ENCODE measurements at regions of chr19 and their contacts with region 1.

Region 1: GRCh38 chr19:32041681-32042292 is 303.6 kb upstream of the ZNF507 start:
- DNase-seq: peak in 1 of 2 experiments; percentile 46
- H3K4me3 ChIP-seq: no peak overlapping the region
- H3K4me3 Mint-ChIP-seq: no peak overlapping the region
- H3K27ac Mint-ChIP-seq: no peak overlapping the region
- H3K4me1 ChIP-seq: no peaks in the 10 kb centered on the region
- H3K4me1 Mint-ChIP-seq: no peaks in the 10 kb centered on the region
- H3K27me3 ChIP-seq: no peaks in the 10 kb centered on the region
- H3K27me3 Mint-ChIP-seq: peaks cover 24% of the 10 kb centered on the region
- CTCF ChIP-seq: peak; percentile 52 to 67

Region 2: GRCh38 chr19:31681121-31681520 is 360.7 kb before region 1 on chr19:
- CTCF ChIA-PET with region 1: no interaction called
- POLR2A ChIA-PET with region 1: no interaction called
- intact Hi-C with region 1: loop called (anchors 10 kb)
- DNase-seq: no peak
- H3K4me3 ChIP-seq: no peak overlapping the region
- H3K4me3 Mint-ChIP-seq: no peak overlapping the region
- H3K27ac Mint-ChIP-seq: no peak overlapping the region
- H3K4me1 ChIP-seq: no peaks in the 10 kb centered on the region
- H3K4me1 Mint-ChIP-seq: no peaks in the 10 kb centered on the region
- H3K27me3 ChIP-seq: no peaks in the 10 kb centered on the region; the same call in 1 of the 2 replicates
- H3K27me3 Mint-ChIP-seq: peaks cover 20% of the 10 kb centered on the region
- CTCF ChIP-seq: no peak

Measured in Caco-2 (cell line).